Gastrocnemius medialis (tissue), 4 donors: ENCODE measurements at regions of chr1 and their contacts with region 1.

Region 1: GRCh38 chr1:84573967-84574842 is at the start of gene CTBS:
- DNase-seq: peak; percentile 76 to 81
- ATAC-seq: peak; percentile 88 to 92
- H3K4me3 ChIP-seq: peak within 1 kb of the TSS; percentile 70 to 89 (median 88)
- H3K27ac ChIP-seq: peak within 1 kb of the TSS; percentile 91 to 97 (median 96)
- H3K4me1 ChIP-seq: peaks cover 14 to 22% of the 10 kb centered on the region in 2 donors
- H3K27me3 ChIP-seq: no peaks in the 10 kb centered on the region
- CTCF ChIP-seq: no peak
- POLR2A ChIP-seq: peak; percentile 72 to 78
- total RNA-seq, gene CTBS: 4.0 to 6.6 (median 4.7) TPM

Region 2: DNA sequence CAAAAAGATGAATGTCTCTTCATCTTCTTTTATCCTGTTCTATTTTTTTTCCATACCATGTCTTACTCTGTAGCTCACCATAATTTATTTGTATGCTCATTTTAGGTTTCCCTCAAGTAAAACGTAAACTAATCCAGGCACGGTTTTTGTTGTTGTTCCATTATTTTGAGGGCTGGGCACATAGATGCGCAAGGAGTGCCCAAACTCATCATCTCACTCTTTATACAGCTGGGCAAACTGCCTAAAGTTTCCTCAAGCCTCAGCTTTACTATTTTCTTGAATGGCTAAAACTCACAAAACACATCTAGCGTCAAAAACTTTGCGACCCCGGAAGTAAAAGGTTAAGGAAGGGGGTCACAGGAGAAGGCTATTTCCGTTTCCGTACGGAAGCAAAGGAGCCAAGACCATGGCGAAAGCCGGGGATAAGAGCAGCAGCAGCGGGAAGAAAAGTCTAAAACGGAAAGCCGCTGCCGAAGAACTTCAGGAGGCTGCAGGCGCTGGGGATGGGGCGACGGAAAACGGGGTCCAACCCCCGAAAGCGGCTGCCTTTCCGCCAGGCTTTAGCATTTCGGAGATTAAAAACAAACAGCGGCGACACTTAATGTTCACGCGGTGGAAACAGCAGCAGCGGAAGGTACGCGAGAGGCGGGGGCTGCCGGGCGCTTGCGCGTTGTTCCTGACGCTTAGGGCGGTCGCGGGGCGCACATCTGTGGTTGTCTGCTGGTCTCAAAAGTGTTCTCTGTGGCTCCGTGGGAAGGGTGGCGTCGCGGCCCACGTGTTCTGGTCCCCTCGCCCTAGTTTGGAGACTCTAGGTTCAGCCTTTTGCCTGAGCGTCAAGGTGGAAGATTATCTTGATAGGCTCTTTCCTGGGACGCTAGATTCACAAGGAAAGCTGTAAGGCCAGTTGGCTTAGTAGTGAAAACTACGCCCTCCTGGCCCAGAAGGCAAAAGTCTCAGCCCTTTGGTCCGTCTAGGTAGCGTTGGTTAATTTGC is 95.0 kb before region 1 on chr1 and contains the start of gene RPF1:
- in situ Hi-C with region 1: no loop called
- intact Hi-C with region 1: loop called (anchors 1 kb)
- DNase-seq: peak; percentile 54 to 60
- ATAC-seq: peak; percentile 97 to 99
- H3K4me3 ChIP-seq: peak within 1 kb of the TSS; percentile 66 to 95 (median 84)
- H3K27ac ChIP-seq: peak within 1 kb of the TSS; percentile 81 to 92 (median 88)
- H3K4me1 ChIP-seq: peaks cover 24 to 26% of the 10 kb centered on the region in 2 donors
- H3K27me3 ChIP-seq: peaks cover 0 to 22% (median 20%) of the 10 kb centered on the region in 3 donors
- CTCF ChIP-seq: no peak
- POLR2A ChIP-seq: peak; percentile 66 to 73
- total RNA-seq, gene RPF1: 35.9 to 61.9 (median 52.4) TPM

Region 3: DNA sequence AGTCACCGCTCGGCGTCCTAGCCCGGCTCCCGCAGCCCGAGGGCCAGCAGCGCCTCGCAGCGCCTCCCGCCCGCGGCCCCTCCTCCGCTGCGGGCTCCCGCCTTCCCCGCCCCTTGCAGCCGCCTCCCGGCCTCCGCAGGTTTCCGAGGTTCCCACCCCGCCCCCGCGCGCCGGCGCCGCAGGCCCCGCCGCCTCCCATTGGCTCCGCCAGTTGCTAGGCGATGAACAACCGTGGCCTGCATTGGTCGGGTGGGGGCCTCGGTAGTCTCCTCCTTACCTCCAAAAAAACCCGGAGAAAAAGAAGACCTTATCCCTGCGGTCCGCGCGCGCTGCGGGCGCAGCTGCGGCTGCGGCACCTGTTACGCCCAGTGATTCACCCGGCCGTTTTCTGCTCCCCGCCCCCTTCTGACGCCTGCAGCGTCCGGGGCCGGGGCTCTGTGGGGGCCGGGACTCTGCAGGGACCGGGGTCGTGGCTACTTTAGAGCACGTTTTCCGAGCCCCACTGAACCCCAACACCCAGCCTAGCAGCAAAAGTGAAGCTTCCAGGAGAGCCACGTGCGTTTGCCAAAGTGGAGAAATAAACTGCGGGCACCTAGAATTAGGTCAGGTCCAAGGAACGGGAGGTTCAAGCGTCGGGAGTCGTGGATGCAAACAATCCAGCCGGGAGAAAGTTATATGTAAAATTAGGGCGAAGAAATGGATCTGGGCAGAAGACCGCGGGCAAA is 116.4 kb after region 1 on chr1 and contains the start of gene SSX2IP:
- in situ Hi-C with region 1: loop called in 1 of 4 experiments (anchors 5 kb)
- intact Hi-C with region 1: loop called (anchors 2 kb)
- DNase-seq: peak; percentile 97 to 99
- ATAC-seq: peak; percentile 97 to 98
- H3K4me3 ChIP-seq: peak within 1 kb of the TSS; percentile 87 to 96 (median 89)
- H3K27ac ChIP-seq: peak within 1 kb of the TSS; percentile 83 to 91 (median 86)
- H3K4me1 ChIP-seq: peaks cover 4 to 17% of the 10 kb centered on the region in 2 donors
- H3K27me3 ChIP-seq: no peaks in the 10 kb centered on the region
- CTCF ChIP-seq: no peak
- POLR2A ChIP-seq: peak; percentile 10 to 61
- total RNA-seq, gene SSX2IP: 3.5 to 7.0 (median 4.7) TPM

Region 4: GRCh38 chr1:84712276-84712874 is 138.2 kb after region 1 on chr1:
- in situ Hi-C with region 1: no loop called
- intact Hi-C with region 1: no loop called
- DNase-seq: no peak
- ATAC-seq: no peak
- H3K4me3 ChIP-seq: no peak overlapping the region
- H3K27ac ChIP-seq: no peak overlapping the region
- H3K4me1 ChIP-seq: no peaks in the 10 kb centered on the region
- H3K27me3 ChIP-seq: no peaks in the 10 kb centered on the region
- CTCF ChIP-seq: no peak
- POLR2A ChIP-seq: no peak